Heart left ventricle (tissue), 16 donors: ENCODE measurements at regions of chr3 and their contacts with region 1.

Region 1: GRCh38 chr3:129824926-129825541 is 68.5 kb downstream of the TMCC1 start:
- DNase-seq: peak in 2 of 5 donors; percentile 28 to 46
- ATAC-seq: peak in 3 of 4 donors; percentile 51 to 60 (median 54)
- H3K4me3 ChIP-seq: no peak overlapping the region
- H3K27ac ChIP-seq: no peak overlapping the region
- H3K4me1 ChIP-seq: peaks cover 0 to 62% (median 4%) of the 10 kb centered on the region in 12 donors
- H3K27me3 ChIP-seq: no peaks in the 10 kb centered on the region
- CTCF ChIP-seq: peak; percentile 61 to 80 (median 71)
- POLR2A ChIP-seq: no peak

Region 2: DNA sequence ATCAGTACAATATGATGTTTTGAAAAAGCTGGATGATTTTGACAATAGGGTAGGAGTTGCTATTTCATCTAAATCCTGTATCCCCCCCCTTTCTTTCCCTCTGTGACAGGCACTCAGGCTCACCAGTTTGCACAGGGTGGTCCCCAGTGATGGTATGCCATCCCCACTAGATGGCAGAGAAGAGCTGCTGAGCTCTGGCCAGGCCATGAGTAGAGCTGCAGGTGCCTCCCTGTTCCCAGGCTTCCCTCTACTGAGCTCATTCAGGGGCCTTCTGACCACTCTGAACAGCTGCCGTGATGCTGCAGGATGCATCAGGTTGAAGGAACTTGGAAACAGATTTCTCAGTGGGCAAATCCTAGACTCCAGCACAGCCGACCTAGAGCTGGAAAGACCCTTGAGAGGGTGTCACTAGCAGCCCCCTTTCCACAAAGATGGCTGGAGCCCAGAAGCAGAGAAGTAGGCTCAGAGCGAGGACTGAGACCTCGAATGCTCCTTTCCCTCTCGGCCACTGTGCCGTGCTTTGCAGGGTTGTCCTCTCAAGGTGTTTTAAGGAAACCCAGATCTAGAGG is 441.7 kb before region 1 on chr3:
- intact Hi-C with region 1: loop called in 2 of 10 experiments (anchors 5 kb)
- DNase-seq: peak in 4 of 5 donors; percentile 50 to 64 (median 62)
- ATAC-seq: peak; percentile 77 to 89 (median 89)
- H3K4me3 ChIP-seq: no peak overlapping the region
- H3K27ac ChIP-seq: peak overlapping the region in 1 of 12 donors; percentile 7
- H3K4me1 ChIP-seq: peaks cover 0 to 19% (median 4%) of the 10 kb centered on the region in 12 donors
- H3K27me3 ChIP-seq: no peaks in the 10 kb centered on the region
- CTCF ChIP-seq: peak; percentile 58 to 84 (median 74)
- POLR2A ChIP-seq: no peak

Region 3: DNA sequence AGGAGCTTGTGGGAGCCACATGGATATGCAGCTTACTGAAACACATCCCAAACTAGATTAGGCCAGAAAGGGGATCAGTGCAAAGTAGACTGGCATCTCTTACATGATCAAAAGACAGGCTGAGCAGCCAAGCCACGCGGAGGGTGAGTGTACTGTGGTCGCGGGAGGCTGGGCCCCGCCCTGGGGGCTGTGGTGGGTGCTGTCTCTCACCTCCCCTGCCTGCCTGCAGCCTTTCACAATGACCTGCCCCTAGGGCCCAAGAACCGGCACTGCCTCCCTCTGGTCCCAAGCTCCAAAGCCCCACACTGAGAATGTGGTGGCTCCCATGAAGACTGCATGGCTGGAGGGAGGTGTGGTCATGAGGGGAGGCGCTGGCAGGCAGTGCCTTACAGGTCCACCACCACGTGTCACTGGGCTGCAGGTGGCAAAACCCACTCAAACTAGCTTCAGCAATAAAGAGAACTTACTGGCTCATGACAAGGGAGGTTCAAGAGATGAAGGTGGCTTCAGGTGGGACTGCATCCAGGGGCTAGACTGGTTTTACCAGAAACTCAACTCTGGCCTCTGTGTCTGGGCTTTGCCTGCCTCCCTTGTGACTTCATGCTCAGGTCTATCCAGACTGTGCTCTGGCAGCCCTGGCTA is 191.2 kb before region 1 on chr3:
- intact Hi-C with region 1: loop called in 8 of 10 experiments (anchors 2 to 5 kb)
- DNase-seq: no peak
- ATAC-seq: no peak
- H3K4me3 ChIP-seq: no peak overlapping the region
- H3K27ac ChIP-seq: no peak overlapping the region
- H3K4me1 ChIP-seq: peaks cover 0 to under 1% (median 0%) of the 10 kb centered on the region in 12 donors
- H3K27me3 ChIP-seq: no peaks in the 10 kb centered on the region
- CTCF ChIP-seq: no peak
- POLR2A ChIP-seq: no peak

Region 4: DNA sequence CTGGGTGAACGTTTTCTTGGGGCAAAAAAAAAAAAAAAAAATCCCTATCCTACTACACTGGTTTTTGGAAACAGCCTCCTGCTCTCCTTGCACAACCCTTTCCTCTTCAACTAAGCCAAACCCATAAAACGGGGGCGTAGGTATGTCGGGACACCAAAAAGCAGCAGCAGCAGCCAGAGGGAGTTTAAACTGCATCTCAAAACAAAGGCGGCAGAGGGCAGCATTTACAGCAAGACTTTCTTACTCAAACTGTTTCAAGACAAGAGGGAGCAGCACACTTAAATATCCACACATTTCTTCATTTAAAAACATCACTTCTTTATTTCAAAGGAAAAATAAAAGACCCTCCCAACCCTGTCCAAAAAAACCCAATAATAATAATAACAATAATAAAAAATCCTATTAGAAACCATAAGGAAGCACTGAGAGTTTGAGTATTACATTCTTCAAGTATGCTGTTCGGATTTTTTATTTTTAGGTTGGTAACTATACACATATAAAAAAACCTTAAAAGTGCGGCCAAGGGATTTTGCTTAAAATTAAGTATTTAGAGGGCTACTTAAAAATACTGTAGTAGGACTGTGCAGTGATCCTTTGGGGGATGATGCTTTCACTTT is 174.7 kb before region 1 on chr3:
- intact Hi-C with region 1: loop called (anchors 1 to 5 kb)
- DNase-seq: peak in 4 of 5 donors; percentile 45 to 73 (median 64)
- ATAC-seq: peak in 3 of 4 donors; percentile 68 to 84 (median 80)
- H3K4me3 ChIP-seq: no peak overlapping the region
- H3K27ac ChIP-seq: no peak overlapping the region
- H3K4me1 ChIP-seq: peaks cover 0 to 27% (median 15%) of the 10 kb centered on the region in 12 donors
- H3K27me3 ChIP-seq: no peaks in the 10 kb centered on the region
- CTCF ChIP-seq: peak; percentile 47 to 82 (median 74)
- POLR2A ChIP-seq: no peak